GM12878 (cell line): ENCODE measurements at regions of chr3 and their contacts with region 1.

Region 1: DNA sequence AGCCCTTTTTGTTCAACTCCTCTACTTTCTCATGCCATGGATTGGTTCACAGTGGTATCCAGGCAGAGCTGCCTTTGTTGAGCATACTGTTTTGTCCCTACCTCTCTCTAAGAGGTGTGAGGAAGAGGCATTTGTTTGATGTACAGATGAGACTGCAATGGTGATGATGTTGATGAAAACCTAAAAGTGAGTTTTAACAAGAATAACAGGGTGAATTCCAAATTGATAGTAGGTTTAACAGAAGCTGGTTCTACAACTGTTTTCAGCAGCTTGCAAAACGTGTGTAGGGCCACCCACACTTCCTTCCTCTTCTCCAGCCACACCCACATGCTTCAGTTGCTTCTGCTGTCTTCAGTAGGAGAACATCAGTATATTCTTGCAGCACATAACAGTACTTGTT is 10.2 kb downstream of the SNRK start:
- DNase-seq: no peak
- ATAC-seq: peak; percentile 90
- H3K4me3 ChIP-seq: 0 out of 2 replicates have a peak overlapping the region, but pooled peaks have one; percentile 1
- H3K27ac ChIP-seq: no peak overlapping the region
- H3K4me1 ChIP-seq: peaks cover 15% of the 10 kb centered on the region
- H3K27me3 ChIP-seq: no peaks in the 10 kb centered on the region
- CTCF ChIP-seq: no peak
- EP300 ChIP-seq: no peak
- POLR2A ChIP-seq: no peak
- RAD21 ChIP-seq: no peak

Region 2: DNA sequence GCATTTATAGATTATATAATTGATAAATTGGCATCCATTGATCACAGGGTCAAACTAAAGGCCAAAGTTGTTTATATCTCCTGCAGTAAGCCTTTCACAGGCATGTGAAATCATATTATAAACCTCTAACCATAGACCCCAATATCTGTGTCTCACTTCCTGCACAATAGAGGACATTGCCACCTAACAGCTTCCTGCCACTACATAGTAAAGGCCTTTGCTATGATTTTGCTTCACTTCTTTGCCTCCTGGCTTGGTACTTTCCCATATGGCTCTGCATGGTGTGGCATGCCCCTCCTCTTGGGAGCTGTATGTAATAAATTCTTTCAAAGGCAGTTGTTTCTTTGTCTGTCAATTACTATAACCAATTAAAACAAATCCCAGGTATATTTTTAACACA is 370.3 kb before region 1 on chr3:
- CTCF ChIA-PET with region 1: no interaction called
- POLR2A ChIA-PET with region 1: no interaction called
- RAD21 ChIA-PET with region 1: no interaction called
- SMC1A ChIA-PET with region 1: no interaction called
- in situ Hi-C with region 1: no loop called
- intact Hi-C with region 1: no loop called
- DNase-seq: no peak
- ATAC-seq: no peak
- H3K4me3 ChIP-seq: no peak overlapping the region
- H3K27ac ChIP-seq: no peak overlapping the region
- H3K4me1 ChIP-seq: no peaks in the 10 kb centered on the region
- H3K27me3 ChIP-seq: no peaks in the 10 kb centered on the region
- CTCF ChIP-seq: no peak
- EP300 ChIP-seq: no peak
- POLR2A ChIP-seq: no peak
- RAD21 ChIP-seq: no peak

Region 3: DNA sequence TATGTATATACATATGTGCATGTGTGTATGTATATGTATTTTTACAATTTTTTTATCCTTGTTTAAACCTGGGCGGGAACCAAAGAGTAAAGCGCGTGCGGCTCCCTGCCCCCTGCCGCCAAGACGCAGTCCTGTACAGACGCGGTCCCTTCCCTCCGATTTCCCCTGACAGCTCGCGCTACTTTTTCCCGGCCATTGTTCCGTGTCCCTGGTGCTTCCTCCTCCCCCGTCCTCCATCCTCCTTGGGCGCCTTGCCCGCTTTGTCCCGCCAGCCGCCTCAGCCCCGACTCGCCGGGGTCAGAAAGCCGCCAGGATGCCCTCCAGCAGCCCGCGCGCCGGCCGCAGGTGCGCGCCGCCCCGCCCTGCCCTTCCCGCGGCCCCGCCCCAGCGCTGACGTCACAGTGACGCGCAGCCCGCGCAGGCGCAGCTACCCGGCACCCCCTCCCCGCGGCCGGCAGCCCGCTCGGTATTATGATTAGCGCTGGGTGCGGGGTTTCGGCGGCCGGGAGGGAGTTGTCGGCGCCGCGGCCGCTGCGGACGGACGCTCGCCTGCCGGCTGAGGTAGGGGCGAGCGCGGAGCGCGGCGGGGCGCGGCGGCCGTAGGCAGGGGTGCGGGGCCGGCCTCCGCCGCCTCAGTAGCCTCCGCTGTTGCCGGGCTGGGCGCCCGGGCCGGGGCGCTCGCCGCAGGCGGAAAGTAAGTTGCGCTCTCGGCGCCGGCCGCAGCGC is 10.3 kb before region 1 on chr3 and contains the start of gene SNRK:
- CTCF ChIA-PET with region 1: interaction called, 16 read pairs
- POLR2A ChIA-PET with region 1: interaction called, 3 read pairs
- RAD21 ChIA-PET with region 1: interaction called, 5 read pairs
- SMC1A ChIA-PET with region 1: interaction called, 11 read pairs
- in situ Hi-C with region 1: no loop called
- intact Hi-C with region 1: no loop called
- DNase-seq: no peak
- ATAC-seq: peak; percentile 85
- H3K4me3 ChIP-seq: peak within 1 kb of the TSS; percentile 82
- H3K27ac ChIP-seq: peak within 1 kb of the TSS; percentile 68
- H3K4me1 ChIP-seq: peaks cover 11% of the 10 kb centered on the region
- H3K27me3 ChIP-seq: peaks cover 0 to 2% of the 10 kb centered on the region in 2 experiments; a peak in 1 of 4 replicates
- CTCF ChIP-seq: peak in 1 of 3 experiments; percentile 10; a peak in 2 of 6 replicates
- EP300 ChIP-seq: no peak
- POLR2A ChIP-seq: peak; percentile 68
- RAD21 ChIP-seq: no peak
- polyA plus RNA-seq, gene SNRK: 1.6 to 2.2 TPM